ENCODE measurements at regions of chr4 and their contacts with region 1.

Region 1: GRCh38 chr4:78517050-78517652 is 34.4 kb upstream of the ANXA3 start:
- DNase-seq: no peak
- H3K4me3 ChIP-seq: no peak overlapping the region
- H3K27ac ChIP-seq: no peak overlapping the region
- H3K4me1 ChIP-seq: no peaks in the 10 kb centered on the region
- H3K27me3 ChIP-seq: no peaks in the 10 kb centered on the region
- CTCF ChIP-seq: peak; percentile 31 to 70 (median 55)
- POLR2A ChIP-seq: no peak

Region 2: GRCh38 chr4:77921701-77922100 is 595.5 kb before region 1 on chr4:
- intact Hi-C with region 1: no loop called
- DNase-seq: no peak
- H3K4me3 ChIP-seq: no peak overlapping the region
- H3K27ac ChIP-seq: no peak overlapping the region
- H3K4me1 ChIP-seq: no peaks in the 10 kb centered on the region
- H3K27me3 ChIP-seq: no peaks in the 10 kb centered on the region
- CTCF ChIP-seq: no peak
- POLR2A ChIP-seq: no peak

Region 3: GRCh38 chr4:77959566-77960338 is 557.4 kb before region 1 on chr4:
- intact Hi-C with region 1: loop called in 1 of 2 experiments (anchors 10 kb)
- DNase-seq: peak in 1 of 7 donors; percentile 26
- H3K4me3 ChIP-seq: no peak overlapping the region
- H3K27ac ChIP-seq: no peak overlapping the region
- H3K4me1 ChIP-seq: no peaks in the 10 kb centered on the region
- H3K27me3 ChIP-seq: no peaks in the 10 kb centered on the region
- CTCF ChIP-seq: peak; percentile 45 to 74 (median 58)
- POLR2A ChIP-seq: no peak

Region 4: DNA sequence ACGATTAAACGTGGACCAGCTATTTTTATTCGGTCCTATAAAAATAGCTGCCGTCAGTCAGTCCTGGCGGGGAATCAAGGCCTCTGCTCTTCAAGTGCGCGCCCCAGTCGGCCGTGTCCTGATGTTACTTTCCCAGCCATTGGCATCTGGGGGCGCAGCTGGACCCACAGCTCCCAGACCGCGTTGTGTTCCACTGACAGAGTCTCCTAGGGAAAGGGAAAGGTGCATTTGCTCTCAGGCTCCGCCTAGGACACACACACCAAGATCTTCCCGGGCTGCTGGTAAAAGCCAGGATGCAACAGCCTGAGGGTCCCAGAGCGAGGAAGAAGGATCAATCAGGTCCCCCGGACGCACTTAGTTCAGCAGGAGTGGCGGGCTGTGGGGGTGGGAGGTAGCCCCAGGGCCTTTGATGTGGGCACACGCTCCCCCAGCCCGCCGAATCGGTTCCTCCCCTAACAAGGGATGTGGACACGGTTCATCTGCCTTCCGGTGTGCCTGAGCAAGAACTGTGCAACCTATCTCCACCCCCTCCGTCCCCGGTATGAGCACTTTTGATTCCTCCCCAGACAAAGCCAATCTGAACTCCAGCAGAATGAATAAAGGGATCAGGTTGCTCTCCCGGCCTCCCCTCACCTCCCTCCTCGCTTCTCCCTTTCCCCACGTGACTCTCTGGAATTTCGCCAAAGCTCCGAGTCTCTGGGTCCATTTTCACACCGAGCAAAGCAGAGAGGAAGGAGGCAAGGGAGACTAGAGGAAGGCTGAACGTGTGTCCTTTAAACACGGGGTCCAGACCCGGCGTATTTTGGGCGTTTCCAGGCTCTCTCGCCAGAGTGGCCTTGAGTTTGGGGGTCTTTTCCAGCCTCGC is 460.7 kb before region 1 on chr4:
- intact Hi-C with region 1: loop called in 1 of 2 experiments (anchors 10 kb)
- DNase-seq: peak; percentile 55 to 80 (median 69)
- H3K4me3 ChIP-seq: peak overlapping the region in 2 of 4 donors; percentile 33 to 47
- H3K27ac ChIP-seq: peak overlapping the region in 1 of 5 donors; percentile 74
- H3K4me1 ChIP-seq: peaks cover 28 to 35% of the 10 kb centered on the region in 2 donors
- H3K27me3 ChIP-seq: peaks cover 19% of the 10 kb centered on the region
- CTCF ChIP-seq: peak in 1 of 6 experiments; percentile 17
- POLR2A ChIP-seq: no peak

Measured in adrenal gland (tissue), 19 donors.